Naive thymus-derived CD4-positive, alpha-beta T cell (primary cell): ENCODE measurements at regions of chr1 and their contacts with region 1.

Region 1: DNA sequence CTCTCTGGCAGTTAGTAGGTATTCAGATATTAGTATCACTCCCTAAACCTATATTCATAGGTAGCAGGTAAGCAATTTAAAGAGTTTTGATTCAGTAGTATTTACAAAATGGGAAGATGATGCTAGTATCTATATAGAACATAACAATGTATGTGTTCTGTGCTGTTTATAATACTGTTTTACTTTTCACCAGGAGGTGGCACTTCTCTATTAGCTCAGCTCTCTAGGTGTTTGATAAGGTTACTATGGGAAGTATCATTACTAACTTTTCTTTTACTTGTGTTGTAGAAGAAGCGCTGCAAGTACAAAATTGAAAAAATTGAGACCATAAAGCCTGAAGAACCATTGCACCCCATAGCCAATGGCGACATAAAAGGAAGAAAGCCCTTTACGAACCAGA is 49.4 kb upstream of the FASLG start:
- DNase-seq: peak in 6 of 9 donors; percentile 21 to 53 (median 38)
- ATAC-seq: peak; percentile 75
- H3K4me3 ChIP-seq: no peak overlapping the region
- H3K4me3 Mint-ChIP-seq: no peak overlapping the region
- H3K27ac ChIP-seq: no peak overlapping the region
- H3K27ac Mint-ChIP-seq: peak overlapping the region in 3 of 9 donors; percentile 1 to 25 (median 7)
- H3K4me1 ChIP-seq: no peaks in the 10 kb centered on the region
- H3K4me1 Mint-ChIP-seq: peaks cover 0 to 15% (median 6%) of the 10 kb centered on the region in 7 donors
- H3K27me3 ChIP-seq: no peaks in the 10 kb centered on the region
- H3K27me3 Mint-ChIP-seq: no peaks in the 10 kb centered on the region

Region 2: GRCh38 chr1:172449585-172450534 is 159.7 kb before region 1 on chr1:
- CTCF ChIA-PET with region 1: interaction called, 3 read pairs
- POLR2A ChIA-PET with region 1: no interaction called
- intact Hi-C with region 1: loop called in 1 of 2 experiments (anchors 1 kb)
- DNase-seq: peak in 7 of 9 donors; percentile 22 to 42 (median 32)
- ATAC-seq: peak; percentile 90
- H3K4me3 ChIP-seq: no peak overlapping the region
- H3K4me3 Mint-ChIP-seq: peak overlapping the region in 4 of 10 donors; percentile 35 to 67 (median 56)
- H3K27ac ChIP-seq: no peak overlapping the region
- H3K27ac Mint-ChIP-seq: peak overlapping the region in 4 of 9 donors; percentile 45 to 90 (median 87)
- H3K4me1 ChIP-seq: no peaks in the 10 kb centered on the region
- H3K4me1 Mint-ChIP-seq: peaks cover 0 to 23% (median 18%) of the 10 kb centered on the region in 7 donors
- H3K27me3 ChIP-seq: no peaks in the 10 kb centered on the region
- H3K27me3 Mint-ChIP-seq: peaks cover 0 to 3% (median 0%) of the 10 kb centered on the region in 5 donors

Region 3: DNA sequence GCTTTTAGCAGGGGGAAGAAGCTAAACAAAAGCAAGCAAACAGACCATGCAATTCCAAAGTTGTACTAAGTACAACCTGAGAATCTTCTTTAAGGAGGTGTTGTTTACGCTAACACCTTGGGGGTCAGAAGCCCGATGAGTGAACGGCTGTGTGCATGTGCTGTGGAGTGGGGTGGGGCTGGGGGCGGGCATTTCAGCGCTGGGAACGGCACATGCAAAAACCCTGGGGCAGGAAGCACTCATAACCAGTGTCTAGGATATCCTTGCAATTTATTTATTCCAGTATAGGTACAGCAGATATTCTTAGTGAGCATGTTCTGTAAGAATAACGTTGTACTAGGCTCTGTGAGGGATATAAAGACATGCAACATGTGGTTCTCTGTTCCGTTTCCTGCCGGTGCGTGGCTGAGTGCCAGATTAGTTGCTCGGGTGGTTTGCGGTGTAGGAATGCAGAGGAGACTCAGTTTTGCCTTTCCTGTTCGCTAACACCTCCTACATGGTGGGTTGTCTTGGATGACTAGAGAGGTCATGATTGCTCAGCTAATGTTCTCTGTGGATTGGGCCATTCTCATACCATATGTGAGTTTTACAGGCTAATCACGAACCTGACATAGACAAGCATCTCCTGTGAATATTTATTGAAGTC is 53.1 kb after region 1 on chr1:
- CTCF ChIA-PET with region 1: interaction called, 5 read pairs
- POLR2A ChIA-PET with region 1: no interaction called
- intact Hi-C with region 1: loop called (anchors 2 to 5 kb)
- DNase-seq: peak; percentile 50 to 86 (median 82)
- ATAC-seq: peak; percentile 87
- H3K4me3 ChIP-seq: peak overlapping the region; percentile 22
- H3K4me3 Mint-ChIP-seq: peak overlapping the region; percentile 44 to 75 (median 66)
- H3K27ac ChIP-seq: no peak overlapping the region
- H3K27ac Mint-ChIP-seq: peak overlapping the region in 8 of 9 donors; percentile 3 to 74 (median 51)
- H3K4me1 ChIP-seq: peaks cover 42 to 49% of the 10 kb centered on the region in 2 donors
- H3K4me1 Mint-ChIP-seq: peaks cover 41 to 78% (median 57%) of the 10 kb centered on the region in 7 donors
- H3K27me3 ChIP-seq: no peaks in the 10 kb centered on the region
- H3K27me3 Mint-ChIP-seq: peaks cover 0 to 8% (median 0%) of the 10 kb centered on the region in 5 donors

Region 4: GRCh38 chr1:172699111-172699510 is 89.6 kb after region 1 on chr1:
- CTCF ChIA-PET with region 1: interaction called, 3 read pairs
- POLR2A ChIA-PET with region 1: no interaction called
- intact Hi-C with region 1: loop called in 1 of 2 experiments (anchors 1 kb)
- DNase-seq: peak; percentile 13 to 76 (median 65)
- ATAC-seq: peak; percentile 92
- H3K4me3 ChIP-seq: peak overlapping the region; percentile 37
- H3K4me3 Mint-ChIP-seq: peak overlapping the region; percentile 61 to 81 (median 76)
- H3K27ac ChIP-seq: peak overlapping the region; percentile 44
- H3K27ac Mint-ChIP-seq: peak overlapping the region in 7 of 9 donors; percentile 87 to 98 (median 92)
- H3K4me1 ChIP-seq: peaks cover 77 to 80% of the 10 kb centered on the region in 2 donors
- H3K4me1 Mint-ChIP-seq: peaks cover 0 to 53% (median 0%) of the 10 kb centered on the region in 7 donors
- H3K27me3 ChIP-seq: no peaks in the 10 kb centered on the region
- H3K27me3 Mint-ChIP-seq: no peaks in the 10 kb centered on the region